Activated CD8-positive, alpha-beta memory T cell treated with anti-CD3 and anti-CD28 coated beads, Interleukin-2, amount 10 ng/mL, durations not matched to agents 7 days and 5 days (primary cell): ENCODE measurements at regions of chr10 and their contacts with region 1.

Region 1: DNA sequence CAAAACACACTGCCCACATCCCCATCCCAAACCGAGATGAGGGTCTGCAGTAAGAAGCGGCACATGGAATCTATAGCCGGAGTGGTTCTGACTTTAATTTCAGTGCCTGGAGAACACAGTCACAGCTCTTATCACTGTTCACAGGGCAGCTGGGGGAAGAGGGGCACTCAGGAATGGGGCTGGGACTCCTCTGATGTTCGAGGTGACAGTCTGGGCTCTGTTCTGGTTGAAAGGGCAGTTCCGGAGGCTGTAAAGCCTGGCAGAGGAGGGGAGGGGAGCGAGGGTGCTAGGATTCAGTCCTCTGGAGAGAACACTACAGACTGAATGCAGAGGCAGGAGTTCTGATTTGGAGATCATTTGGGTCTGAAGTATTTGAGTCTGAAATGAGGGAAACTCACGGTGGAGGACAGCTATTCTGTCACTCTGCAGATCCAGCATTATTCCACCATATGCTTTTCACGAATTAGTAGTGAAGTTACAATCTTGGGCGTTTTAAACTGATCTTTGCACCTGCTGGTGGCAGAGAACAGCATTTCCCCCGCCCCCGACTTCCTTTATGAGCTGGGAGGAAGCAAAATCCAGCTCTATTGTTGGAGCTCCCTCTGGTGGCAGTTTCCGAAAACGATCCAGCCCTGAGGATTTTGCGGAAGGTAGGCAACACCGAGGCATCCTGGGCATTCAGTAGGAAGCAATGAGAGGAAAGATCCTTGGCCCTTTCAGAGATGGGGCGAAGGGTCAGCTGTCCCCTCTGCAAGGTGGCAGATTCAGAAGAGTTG is 22.7 kb upstream of the KCNK18 start:
- DNase-seq: peak; percentile 86
- ATAC-seq: peak; percentile 87
- H3K4me3 Mint-ChIP-seq: peak overlapping the region; percentile 76
- H3K27ac Mint-ChIP-seq: peak overlapping the region; percentile 76
- H3K4me1 Mint-ChIP-seq: peaks cover 17% of the 10 kb centered on the region
- H3K27me3 Mint-ChIP-seq: peaks cover 48% of the 10 kb centered on the region

Region 2: DNA sequence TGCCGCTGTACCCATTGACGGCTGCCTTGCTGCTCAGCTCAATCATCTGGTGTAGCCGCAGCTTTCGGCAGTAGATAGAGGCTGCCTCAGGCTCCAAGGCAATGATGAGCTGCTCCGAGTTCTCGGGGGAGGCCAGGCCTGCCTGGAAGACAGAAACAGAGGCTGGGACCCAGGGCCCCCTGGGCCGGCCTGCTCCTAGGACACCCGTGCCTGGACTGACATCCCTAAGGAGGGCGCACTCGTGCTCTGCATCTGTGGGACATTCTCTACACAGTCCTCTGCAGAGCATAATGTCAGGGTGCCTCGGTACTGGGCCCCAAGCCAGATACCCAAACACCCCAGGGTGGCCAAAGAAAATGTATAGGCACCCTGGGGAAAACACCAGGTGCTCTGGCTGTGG is 490.8 kb before region 1 on chr10:
- CTCF ChIA-PET with region 1: interaction called, 15 read pairs
- DNase-seq: no peak
- ATAC-seq: no peak
- H3K4me3 Mint-ChIP-seq: no peak overlapping the region
- H3K27ac Mint-ChIP-seq: no peak overlapping the region
- H3K4me1 Mint-ChIP-seq: no peaks in the 10 kb centered on the region
- H3K27me3 Mint-ChIP-seq: no peaks in the 10 kb centered on the region

Region 3: GRCh38 chr10:116787893-116788665 is 386.5 kb before region 1 on chr10:
- CTCF ChIA-PET with region 1: interaction called, 34 read pairs
- DNase-seq: peak; percentile 84
- ATAC-seq: peak; percentile 83
- H3K4me3 Mint-ChIP-seq: peak overlapping the region; percentile 26
- H3K27ac Mint-ChIP-seq: peak overlapping the region; percentile 28
- H3K4me1 Mint-ChIP-seq: peaks cover 17% of the 10 kb centered on the region
- H3K27me3 Mint-ChIP-seq: peaks cover 5% of the 10 kb centered on the region

Region 4: GRCh38 chr10:116796910-116797513 is 377.6 kb before region 1 on chr10:
- CTCF ChIA-PET with region 1: interaction called, 79 read pairs
- DNase-seq: peak; percentile 74
- ATAC-seq: peak; percentile 78
- H3K4me3 Mint-ChIP-seq: no peak overlapping the region
- H3K27ac Mint-ChIP-seq: no peak overlapping the region
- H3K4me1 Mint-ChIP-seq: peaks cover 7% of the 10 kb centered on the region
- H3K27me3 Mint-ChIP-seq: peaks cover 9% of the 10 kb centered on the region